Naive thymus-derived CD4-positive, alpha-beta T cell (primary cell): ENCODE measurements at regions of chr15 and their contacts with region 1.

Region 1: GRCh38 chr15:82999905-83000671 is 11.4 kb downstream of the C15orf40 start:
- DNase-seq: peak in 8 of 9 donors; percentile 13 to 68 (median 50)
- ATAC-seq: peak; percentile 94
- H3K4me3 ChIP-seq: peak overlapping the region; percentile 21
- H3K4me3 Mint-ChIP-seq: peak overlapping the region; percentile 59 to 87 (median 81)
- H3K27ac ChIP-seq: peak overlapping the region; percentile 62
- H3K27ac Mint-ChIP-seq: peak overlapping the region; percentile 44 to 92 (median 83)
- H3K4me1 ChIP-seq: peaks cover 3 to 5% of the 10 kb centered on the region in 2 donors
- H3K4me1 Mint-ChIP-seq: peaks cover 0 to 13% (median 9%) of the 10 kb centered on the region in 7 donors
- H3K27me3 ChIP-seq: no peaks in the 10 kb centered on the region
- H3K27me3 Mint-ChIP-seq: no peaks in the 10 kb centered on the region

Region 2: DNA sequence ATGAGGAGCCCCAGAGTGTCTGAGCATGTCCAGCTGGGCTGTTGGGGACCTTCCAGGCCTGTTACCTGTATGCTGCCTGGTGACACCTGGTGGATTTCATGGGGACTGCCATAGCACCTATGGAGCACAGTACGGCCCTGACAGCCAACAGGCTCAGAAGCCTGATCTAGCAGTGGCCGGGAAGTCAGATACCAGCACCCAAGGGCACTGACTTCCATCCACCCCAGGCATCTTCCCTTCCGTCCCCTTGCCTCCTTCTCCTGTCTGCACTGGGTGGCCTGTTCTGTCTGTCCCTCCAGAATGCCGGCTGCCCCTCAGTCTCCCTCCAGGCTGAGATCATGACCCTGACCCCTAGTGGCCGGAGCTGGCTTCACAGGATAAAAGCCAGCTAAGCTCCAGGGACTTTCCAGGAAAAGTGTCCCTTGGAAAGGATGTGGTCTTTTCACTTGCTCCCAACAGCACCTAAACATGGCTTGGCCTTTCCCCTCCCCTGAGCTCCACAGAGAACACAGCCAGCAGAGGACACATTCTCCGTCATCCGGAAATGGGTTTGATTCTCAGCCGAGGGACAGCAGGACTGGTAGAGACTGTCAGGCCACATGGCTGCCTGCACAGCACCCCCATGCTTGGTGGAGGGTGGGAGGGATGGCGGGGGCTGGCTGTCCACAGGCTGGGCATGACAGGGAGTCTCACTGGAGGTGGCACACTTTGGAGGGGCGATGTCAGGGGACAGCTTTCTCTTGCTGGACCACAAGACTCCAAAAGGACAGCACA is 469.3 kb before region 1 on chr15:
- CTCF ChIA-PET with region 1: interaction called, 15 read pairs
- POLR2A ChIA-PET with region 1: interaction called, 9 read pairs
- intact Hi-C with region 1: no loop called
- DNase-seq: peak; percentile 49 to 75 (median 73)
- ATAC-seq: peak; percentile 94
- H3K4me3 ChIP-seq: peak overlapping the region; percentile 45
- H3K4me3 Mint-ChIP-seq: peak overlapping the region; percentile 45 to 92 (median 72)
- H3K27ac ChIP-seq: peak overlapping the region; percentile 53
- H3K27ac Mint-ChIP-seq: peak overlapping the region in 6 of 9 donors; percentile 2 to 71 (median 34)
- H3K4me1 ChIP-seq: no peaks in the 10 kb centered on the region
- H3K4me1 Mint-ChIP-seq: peaks cover 0 to 10% (median 4%) of the 10 kb centered on the region in 7 donors
- H3K27me3 ChIP-seq: no peaks in the 10 kb centered on the region
- H3K27me3 Mint-ChIP-seq: peaks cover 0 to 9% (median 0%) of the 10 kb centered on the region in 5 donors

Region 3: GRCh38 chr15:82647045-82647834 is 352.8 kb before region 1 on chr15 and contains the start of gene CPEB1:
- CTCF ChIA-PET with region 1: no interaction called
- POLR2A ChIA-PET with region 1: no interaction called
- intact Hi-C with region 1: loop called in 1 of 2 experiments (anchors 5 kb)
- DNase-seq: peak; percentile 4 to 33 (median 26)
- ATAC-seq: peak; percentile 68
- H3K4me3 ChIP-seq: peak within 1 kb of the TSS; percentile 47
- H3K4me3 Mint-ChIP-seq: peak within 1 kb of the TSS; percentile 62 to 85 (median 71)
- H3K27ac ChIP-seq: no peak within 1 kb of the TSS
- H3K27ac Mint-ChIP-seq: peak within 1 kb of the TSS in 2 of 9 donors; percentile 59 to 62
- H3K4me1 ChIP-seq: peaks cover 0 to 14% of the 10 kb centered on the region in 2 donors
- H3K4me1 Mint-ChIP-seq: peaks cover 0 to 9% (median 4%) of the 10 kb centered on the region in 7 donors
- H3K27me3 ChIP-seq: peaks cover 5 to 15% of the 10 kb centered on the region in 2 donors
- H3K27me3 Mint-ChIP-seq: peaks cover 21 to 69% (median 41%) of the 10 kb centered on the region in 5 donors
- total RNA-seq, gene CPEB1: 0.24 to 1.0 (median 0.51) TPM in 4 of 5 experiments, not detected in the other

Region 4: GRCh38 chr15:82749951-82750830 is 249.9 kb before region 1 on chr15:
- CTCF ChIA-PET with region 1: no interaction called
- POLR2A ChIA-PET with region 1: no interaction called
- intact Hi-C with region 1: loop called (anchors 1 to 2 kb)
- DNase-seq: peak; percentile 51 to 84 (median 70)
- ATAC-seq: peak; percentile 96
- H3K4me3 ChIP-seq: peak overlapping the region; percentile 88
- H3K4me3 Mint-ChIP-seq: peak overlapping the region; percentile 93 to 100 (median 98)
- H3K27ac ChIP-seq: peak overlapping the region; percentile 78
- H3K27ac Mint-ChIP-seq: peak overlapping the region; percentile 89 to 98 (median 95)
- H3K4me1 ChIP-seq: peaks cover 10 to 15% of the 10 kb centered on the region in 2 donors
- H3K4me1 Mint-ChIP-seq: peaks cover 26 to 69% (median 57%) of the 10 kb centered on the region in 7 donors
- H3K27me3 ChIP-seq: no peaks in the 10 kb centered on the region
- H3K27me3 Mint-ChIP-seq: no peaks in the 10 kb centered on the region

Region 5: GRCh38 chr15:82832601-82833361 is 167.3 kb before region 1 on chr15:
- CTCF ChIA-PET with region 1: no interaction called
- POLR2A ChIA-PET with region 1: no interaction called
- intact Hi-C with region 1: loop called in 1 of 2 experiments (anchors 5 kb)
- DNase-seq: no peak
- ATAC-seq: peak; percentile 44
- H3K4me3 ChIP-seq: no peak overlapping the region
- H3K4me3 Mint-ChIP-seq: peak overlapping the region in 2 of 10 donors; percentile 8 to 65
- H3K27ac ChIP-seq: no peak overlapping the region
- H3K27ac Mint-ChIP-seq: peak overlapping the region in 4 of 9 donors; percentile 28 to 95 (median 50)
- H3K4me1 ChIP-seq: no peaks in the 10 kb centered on the region
- H3K4me1 Mint-ChIP-seq: peaks cover 3 to 55% (median 15%) of the 10 kb centered on the region in 7 donors
- H3K27me3 ChIP-seq: no peaks in the 10 kb centered on the region
- H3K27me3 Mint-ChIP-seq: no peaks in the 10 kb centered on the region

Region 6: GRCh38 chr15:82849556-82850512 is 150.3 kb before region 1 on chr15:
- CTCF ChIA-PET with region 1: no interaction called
- POLR2A ChIA-PET with region 1: no interaction called
- intact Hi-C with region 1: loop called (anchors 1 to 2 kb)
- DNase-seq: peak; percentile 12 to 53 (median 33)
- ATAC-seq: peak; percentile 78
- H3K4me3 ChIP-seq: no peak overlapping the region
- H3K4me3 Mint-ChIP-seq: no peak overlapping the region
- H3K27ac ChIP-seq: no peak overlapping the region
- H3K27ac Mint-ChIP-seq: peak overlapping the region in 3 of 9 donors; percentile 36 to 70 (median 56)
- H3K4me1 ChIP-seq: no peaks in the 10 kb centered on the region
- H3K4me1 Mint-ChIP-seq: peaks cover 11 to 29% (median 20%) of the 10 kb centered on the region in 7 donors
- H3K27me3 ChIP-seq: no peaks in the 10 kb centered on the region
- H3K27me3 Mint-ChIP-seq: peaks cover 0 to 18% (median 0%) of the 10 kb centered on the region in 5 donors

Region 7: GRCh38 chr15:83198476-83198875 is 198.4 kb after region 1 on chr15:
- CTCF ChIA-PET with region 1: no interaction called
- POLR2A ChIA-PET with region 1: no interaction called
- intact Hi-C with region 1: no loop called
- DNase-seq: no peak
- ATAC-seq: no peak
- H3K4me3 ChIP-seq: no peak overlapping the region
- H3K4me3 Mint-ChIP-seq: peak overlapping the region in 1 of 10 donors; percentile 5
- H3K27ac ChIP-seq: no peak overlapping the region
- H3K27ac Mint-ChIP-seq: peak overlapping the region in 1 of 9 donors; percentile 25
- H3K4me1 ChIP-seq: no peaks in the 10 kb centered on the region
- H3K4me1 Mint-ChIP-seq: peaks cover 0 to 41% (median 11%) of the 10 kb centered on the region in 7 donors
- H3K27me3 ChIP-seq: no peaks in the 10 kb centered on the region
- H3K27me3 Mint-ChIP-seq: peaks cover 4 to 50% (median 15%) of the 10 kb centered on the region in 5 donors

Region 8: DNA sequence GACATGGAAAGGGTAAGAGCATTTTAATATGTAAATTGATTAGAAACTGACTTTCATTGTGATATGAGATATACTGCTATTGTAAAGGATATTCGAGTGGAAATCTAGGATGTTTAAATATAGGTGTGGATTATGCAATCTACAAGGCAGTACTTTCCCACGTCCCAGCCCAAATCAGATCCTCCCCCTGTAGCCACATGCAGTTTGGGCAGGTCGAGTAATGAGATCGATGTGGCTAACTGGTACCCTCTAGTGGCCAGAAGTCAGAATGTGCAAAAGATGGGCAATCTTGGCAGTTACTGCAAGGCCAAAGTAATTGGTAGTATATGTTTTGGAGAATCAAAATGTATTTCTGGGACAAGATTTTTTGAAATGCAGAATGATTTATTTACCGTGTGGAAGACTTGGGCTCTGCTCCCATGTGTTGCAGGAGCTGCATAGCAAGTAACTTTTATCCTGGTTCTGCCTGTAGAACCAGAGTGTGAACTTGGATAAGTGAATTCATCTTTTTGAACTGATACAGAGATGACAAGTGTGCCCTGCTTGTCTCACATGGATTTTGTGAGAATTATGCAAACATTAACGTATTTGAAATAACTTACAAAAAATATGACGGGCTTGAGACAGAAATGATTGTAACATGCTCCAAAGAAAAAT is 559.4 kb after region 1 on chr15:
- CTCF ChIA-PET with region 1: no interaction called
- POLR2A ChIA-PET with region 1: no interaction called
- intact Hi-C with region 1: loop called in 1 of 2 experiments (anchors 10 kb)
- DNase-seq: peak in 8 of 9 donors; percentile 6 to 43 (median 26)
- ATAC-seq: peak; percentile 65
- H3K4me3 ChIP-seq: no peak overlapping the region
- H3K4me3 Mint-ChIP-seq: no peak overlapping the region
- H3K27ac ChIP-seq: no peak overlapping the region
- H3K27ac Mint-ChIP-seq: no peak overlapping the region
- H3K4me1 ChIP-seq: no peaks in the 10 kb centered on the region
- H3K4me1 Mint-ChIP-seq: no peaks in the 10 kb centered on the region
- H3K27me3 ChIP-seq: no peaks in the 10 kb centered on the region
- H3K27me3 Mint-ChIP-seq: peaks cover 3 to 32% (median 18%) of the 10 kb centered on the region in 5 donors